H1 (cell line): ENCODE measurements at regions of chr11 and their contacts with region 1.

Region 1: DNA sequence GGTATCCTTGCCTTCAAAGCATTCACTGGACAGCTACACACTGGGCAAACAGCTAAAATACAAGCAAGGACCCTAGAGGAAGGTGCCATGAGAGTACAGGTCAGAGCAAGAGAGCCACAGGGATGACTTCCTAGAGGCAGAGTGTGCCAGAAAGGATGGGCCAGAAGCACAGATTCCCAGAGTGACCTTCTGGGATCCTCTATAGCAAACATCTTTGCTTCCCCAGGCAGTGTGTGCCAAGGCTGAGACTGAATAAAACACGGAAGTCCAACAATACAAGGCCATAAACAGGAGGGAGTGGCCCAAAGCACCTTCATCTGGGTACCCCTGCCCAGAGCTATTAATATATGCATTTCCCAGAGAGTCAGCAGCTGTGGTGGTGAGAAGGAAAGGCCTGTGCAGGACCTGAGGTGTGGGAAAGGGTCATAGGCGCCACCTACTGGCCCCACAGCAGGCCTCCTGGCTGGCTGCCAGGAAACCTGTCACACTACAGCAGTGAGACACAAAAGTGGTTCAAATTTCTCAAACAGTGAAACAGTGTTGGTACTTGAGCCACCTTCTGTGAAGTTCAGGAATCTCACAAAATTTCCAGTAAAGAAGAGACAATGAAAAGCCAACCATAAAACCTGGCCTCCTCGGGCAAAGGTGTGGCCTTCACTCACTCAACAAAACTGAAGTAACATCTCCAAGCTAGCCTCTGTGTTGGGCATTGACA is 20.3 kb downstream of the CLPB start:
- DNase-seq: peak in 1 of 2 experiments; percentile 79
- H3K4me3 ChIP-seq: no peak overlapping the region
- H3K27ac ChIP-seq: no peak overlapping the region
- H3K4me1 ChIP-seq: peaks cover 0 to 28% (median 13%) of the 10 kb centered on the region in 4 experiments; a peak in 6 of 7 replicates
- H3K27me3 ChIP-seq: no peaks in the 10 kb centered on the region
- CTCF ChIP-seq: peak; percentile 85 to 90 (median 88)
- EP300 ChIP-seq: no peak
- POLR2A ChIP-seq: no peak
- RAD21 ChIP-seq: peak; percentile 83 to 87

Region 2: DNA sequence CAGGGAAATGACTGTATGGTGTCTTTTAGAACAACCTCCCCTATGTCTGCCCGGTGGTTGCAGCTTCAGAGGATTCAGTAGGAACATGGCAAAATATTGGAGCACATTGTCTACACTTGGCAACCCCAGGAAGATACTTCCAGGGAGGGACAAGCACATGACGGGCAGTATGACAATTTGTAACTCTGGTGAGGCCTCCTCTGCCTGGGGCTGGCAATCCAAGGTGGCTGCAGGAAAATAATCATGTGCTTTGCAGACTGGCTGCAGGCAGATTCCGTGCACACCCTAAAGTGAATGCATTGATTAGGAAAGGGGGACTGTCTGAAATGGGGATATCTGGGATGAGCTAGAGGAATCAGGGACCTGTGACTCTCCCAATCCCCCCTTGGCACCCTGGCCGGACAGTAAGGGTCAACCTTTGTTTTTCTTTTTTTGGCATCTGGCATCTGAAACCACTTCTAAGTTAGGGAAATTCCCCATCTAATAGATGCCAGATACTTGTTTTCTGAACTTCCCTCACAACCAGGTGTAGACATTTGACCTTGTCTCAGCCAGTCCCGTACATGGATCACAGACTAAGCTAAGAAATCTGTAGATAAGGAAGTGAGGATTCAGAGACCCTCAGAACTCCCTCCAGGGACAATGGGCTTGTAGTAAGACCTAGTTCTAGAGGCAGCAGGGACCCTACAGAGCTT is 159.6 kb before region 1 on chr11:
- CTCF ChIA-PET with region 1: interaction called, 29 read pairs
- POLR2A ChIA-PET with region 1: no interaction called
- DNase-seq: peak in 1 of 2 experiments; percentile 23
- H3K4me3 ChIP-seq: no peak overlapping the region
- H3K27ac ChIP-seq: no peak overlapping the region
- H3K4me1 ChIP-seq: no peaks in the 10 kb centered on the region
- H3K27me3 ChIP-seq: peaks cover 0 to 11% (median 2%) of the 10 kb centered on the region in 4 experiments; a peak in 2 of 7 replicates
- CTCF ChIP-seq: no peak
- EP300 ChIP-seq: no peak
- POLR2A ChIP-seq: no peak
- RAD21 ChIP-seq: no peak

Region 3: DNA sequence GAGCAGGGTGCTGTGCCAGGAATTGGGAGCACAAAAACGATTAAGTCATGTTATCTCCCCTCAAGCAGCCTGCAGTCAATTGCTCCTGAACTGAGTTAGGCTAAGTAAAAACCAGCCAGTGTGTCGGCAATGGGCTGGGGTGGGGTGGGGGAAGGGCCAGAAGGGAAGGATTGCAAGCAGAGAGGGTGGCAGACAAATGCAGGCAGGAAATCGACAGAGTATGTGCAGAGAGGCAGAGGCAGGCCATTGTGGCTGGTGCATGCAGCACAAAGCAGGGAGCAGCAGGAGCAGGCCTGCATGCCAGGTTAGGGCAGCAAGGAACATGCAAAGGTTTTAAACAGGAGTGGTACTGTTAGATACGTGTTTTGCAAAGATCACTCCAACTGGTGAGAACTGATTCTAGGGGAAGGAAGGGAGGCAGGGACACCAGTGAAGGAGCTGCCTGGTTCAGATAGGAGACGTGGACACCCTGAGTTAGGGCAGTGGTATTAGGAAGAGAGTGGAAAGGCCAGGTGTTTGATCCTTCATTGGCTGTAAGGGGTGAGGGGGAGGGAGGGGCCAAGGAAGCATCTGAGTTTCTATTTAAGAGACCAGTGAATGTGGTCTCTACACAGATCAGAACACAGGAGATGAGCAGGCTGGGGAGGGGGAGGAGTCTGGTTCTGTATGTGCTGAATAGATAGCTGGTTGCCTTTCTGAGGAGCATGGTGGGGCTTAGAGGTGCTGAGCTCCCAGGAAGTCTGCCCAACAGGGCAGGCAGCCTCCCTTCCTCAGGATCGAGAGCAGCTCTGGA is 99.3 kb before region 1 on chr11:
- CTCF ChIA-PET with region 1: interaction called, 12 read pairs
- POLR2A ChIA-PET with region 1: no interaction called
- DNase-seq: no peak
- H3K4me3 ChIP-seq: no peak overlapping the region
- H3K27ac ChIP-seq: 0 out of 2 replicates have a peak overlapping the region, but pooled peaks have one; percentile 3
- H3K4me1 ChIP-seq: peaks cover 0 to 8% (median 5%) of the 10 kb centered on the region in 4 experiments; a peak in 6 of 7 replicates
- H3K27me3 ChIP-seq: no peaks in the 10 kb centered on the region
- CTCF ChIP-seq: no peak
- EP300 ChIP-seq: no peak
- POLR2A ChIP-seq: no peak
- RAD21 ChIP-seq: no peak

Region 4: GRCh38 chr11:72343006-72343756 is 70.9 kb before region 1 on chr11:
- CTCF ChIA-PET with region 1: interaction called, 19 read pairs
- POLR2A ChIA-PET with region 1: no interaction called
- DNase-seq: no peak
- H3K4me3 ChIP-seq: no peak overlapping the region
- H3K27ac ChIP-seq: no peak overlapping the region
- H3K4me1 ChIP-seq: no peaks in the 10 kb centered on the region
- H3K27me3 ChIP-seq: no peaks in the 10 kb centered on the region
- CTCF ChIP-seq: no peak
- EP300 ChIP-seq: no peak
- POLR2A ChIP-seq: no peak
- RAD21 ChIP-seq: no peak

Region 5: DNA sequence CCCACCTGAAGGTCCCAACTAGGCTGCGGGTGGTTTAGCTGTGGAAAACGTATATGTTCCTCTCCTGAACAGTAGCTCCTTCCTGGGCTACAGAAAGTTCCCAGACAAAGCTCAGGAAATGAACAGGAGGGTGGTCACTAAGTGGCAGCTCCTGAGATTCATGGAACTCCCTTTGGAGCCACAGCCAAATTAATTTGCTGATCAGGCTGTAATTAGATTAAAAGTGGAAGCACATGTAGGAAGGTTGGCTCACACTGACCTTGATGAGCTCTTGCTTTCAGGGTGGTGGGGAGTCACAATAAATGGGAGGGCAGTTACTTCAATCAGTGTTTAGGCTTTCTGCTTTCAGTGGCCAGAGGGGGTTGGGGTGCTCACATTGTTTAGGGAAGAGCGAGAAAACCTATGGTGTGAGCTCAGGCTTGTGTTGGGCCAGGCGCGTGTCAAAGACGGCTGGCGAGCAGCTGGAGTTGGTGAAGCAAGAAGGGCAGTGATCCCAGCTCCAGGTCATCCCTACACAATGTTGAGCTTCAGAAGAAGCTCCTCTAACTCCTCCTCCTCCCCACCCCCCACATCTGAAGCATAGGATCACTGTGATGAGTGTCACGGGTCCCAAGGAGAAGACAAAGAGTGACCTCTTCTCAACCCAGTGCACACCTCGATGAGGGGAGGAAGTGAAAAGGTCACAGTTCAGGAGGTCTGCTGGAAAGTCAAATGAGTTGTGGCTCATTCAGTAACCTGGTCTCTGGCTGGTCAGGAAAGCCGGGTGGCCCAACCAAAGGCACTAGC is 22.2 kb before region 1 on chr11:
- CTCF ChIA-PET with region 1: interaction called, 20 read pairs
- POLR2A ChIA-PET with region 1: interaction called, 6 read pairs
- DNase-seq: no peak
- H3K4me3 ChIP-seq: no peak overlapping the region
- H3K27ac ChIP-seq: no peak overlapping the region
- H3K4me1 ChIP-seq: peaks cover 0 to 2% (median 0%) of the 10 kb centered on the region in 4 experiments; a peak in 1 of 7 replicates
- H3K27me3 ChIP-seq: no peaks in the 10 kb centered on the region; a peak in 1 of 7 replicates
- CTCF ChIP-seq: no peak
- EP300 ChIP-seq: no peak
- POLR2A ChIP-seq: no peak
- RAD21 ChIP-seq: no peak

Region 6: GRCh38 chr11:72425053-72425980 is 11.2 kb after region 1 on chr11:
- CTCF ChIA-PET with region 1: interaction called, 262 read pairs
- POLR2A ChIA-PET with region 1: interaction called, 3 read pairs
- DNase-seq: no peak
- H3K4me3 ChIP-seq: no peak overlapping the region
- H3K27ac ChIP-seq: no peak overlapping the region
- H3K4me1 ChIP-seq: peaks cover 0 to 9% (median 2%) of the 10 kb centered on the region in 4 experiments; a peak in 5 of 7 replicates
- H3K27me3 ChIP-seq: no peaks in the 10 kb centered on the region
- CTCF ChIP-seq: no peak
- EP300 ChIP-seq: no peak
- POLR2A ChIP-seq: no peak
- RAD21 ChIP-seq: no peak

Region 7: GRCh38 chr11:73040046-73040445 is 626.0 kb after region 1 on chr11:
- CTCF ChIA-PET with region 1: no interaction called
- POLR2A ChIA-PET with region 1: no interaction called
- DNase-seq: no peak
- H3K4me3 ChIP-seq: no peak overlapping the region
- H3K27ac ChIP-seq: no peak overlapping the region
- H3K4me1 ChIP-seq: peaks cover 0 to 6% (median 0%) of the 10 kb centered on the region in 4 experiments; a peak in 1 of 7 replicates
- H3K27me3 ChIP-seq: no peaks in the 10 kb centered on the region
- CTCF ChIP-seq: no peak
- EP300 ChIP-seq: no peak
- POLR2A ChIP-seq: no peak
- RAD21 ChIP-seq: no peak